ENCODE measurements at regions of chr16 and their contacts with region 1.

Region 1: GRCh38 chr16:70754851-70755600 is 45.9 kb downstream of the VAC14 start:
- DNase-seq: no peak
- H3K4me3 ChIP-seq: no peak overlapping the region
- H3K27ac ChIP-seq: no peak overlapping the region
- H3K4me1 ChIP-seq: peaks cover 4 to 31% (median 24%) of the 10 kb centered on the region in 4 donors
- H3K27me3 ChIP-seq: no peaks in the 10 kb centered on the region
- CTCF ChIP-seq: no peak
- EP300 ChIP-seq: no peak
- POLR2A ChIP-seq: no peak

Region 2: GRCh38 chr16:70576431-70577255 is 178.4 kb before region 1 on chr16:
- in situ Hi-C with region 1: no loop called
- intact Hi-C with region 1: no loop called
- DNase-seq: peak; percentile 33
- H3K4me3 ChIP-seq: no peak overlapping the region
- H3K27ac ChIP-seq: peak overlapping the region; percentile 43 to 59 (median 54)
- H3K4me1 ChIP-seq: peaks cover 25 to 51% (median 30%) of the 10 kb centered on the region in 4 donors
- H3K27me3 ChIP-seq: no peaks in the 10 kb centered on the region
- CTCF ChIP-seq: no peak
- EP300 ChIP-seq: no peak
- POLR2A ChIP-seq: no peak

Region 3: DNA sequence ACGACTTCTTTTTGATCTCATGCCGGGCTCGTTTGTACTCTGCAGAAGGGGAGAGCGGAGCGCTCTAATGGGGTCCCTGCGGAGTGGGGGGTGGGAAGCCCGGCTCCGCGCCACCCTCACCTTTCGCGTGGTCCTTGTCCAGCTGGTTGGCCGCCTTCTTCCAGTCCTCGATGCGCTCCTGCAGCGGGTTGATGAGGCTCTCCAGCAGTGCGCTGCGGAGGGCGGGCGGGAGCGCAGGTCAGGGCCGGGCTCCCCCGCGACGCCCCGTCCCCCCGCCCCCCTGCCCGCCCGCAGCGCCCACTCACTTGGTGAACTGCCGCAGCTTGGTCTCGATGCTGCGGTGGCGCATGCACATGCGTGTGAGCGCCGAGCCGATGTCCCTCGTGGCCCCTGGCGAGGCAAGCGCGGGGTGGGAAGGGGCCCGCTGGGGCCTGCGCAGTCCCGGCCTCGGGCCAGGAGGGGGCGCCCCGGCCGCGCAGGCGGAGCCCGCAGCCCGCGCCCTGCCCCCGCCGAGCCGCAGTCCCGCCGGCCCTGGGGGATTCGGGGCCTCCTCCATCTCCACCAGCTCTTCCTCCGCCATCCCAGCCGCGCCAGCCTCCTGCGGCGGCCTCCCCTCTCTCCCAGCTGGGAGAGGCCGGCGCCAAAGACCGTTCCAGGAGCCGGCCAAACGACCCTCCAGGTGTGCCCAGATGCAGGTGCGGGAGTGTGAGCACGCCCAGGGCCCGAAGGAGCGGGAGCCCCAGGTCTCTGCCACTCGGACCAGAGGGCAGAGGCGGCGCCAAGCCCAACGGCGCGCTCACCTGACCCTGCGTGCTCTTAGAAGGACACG is 75.1 kb before region 1 on chr16:
- in situ Hi-C with region 1: loop called in 2 of 4 experiments (anchors 10 kb)
- intact Hi-C with region 1: loop called (anchors 5 kb)
- DNase-seq: no peak
- H3K4me3 ChIP-seq: no peak overlapping the region
- H3K27ac ChIP-seq: peak overlapping the region; percentile 80 to 91 (median 89)
- H3K4me1 ChIP-seq: peaks cover 33 to 49% (median 40%) of the 10 kb centered on the region in 4 donors
- H3K27me3 ChIP-seq: no peaks in the 10 kb centered on the region
- CTCF ChIP-seq: peak in 4 of 5 experiments; percentile 8 to 64 (median 51)
- EP300 ChIP-seq: no peak
- POLR2A ChIP-seq: no peak

Measured in transverse colon (tissue), 4 donors.